B cell (primary cell): ENCODE measurements at regions of chr19 and their contacts with region 1.

Region 1: GRCh38 chr19:40305403-40305802 is 20.3 kb upstream of the AKT2 start:
- DNase-seq: peak; percentile 84
- ATAC-seq: peak; percentile 68
- H3K4me3 ChIP-seq: no peak overlapping the region
- H3K4me3 Mint-ChIP-seq: no peak overlapping the region
- H3K27ac ChIP-seq: no peak overlapping the region
- H3K27ac Mint-ChIP-seq: no peak overlapping the region
- H3K4me1 ChIP-seq: peaks cover 0 to 3% of the 10 kb centered on the region in 2 donors
- H3K4me1 Mint-ChIP-seq: peaks cover 2% of the 10 kb centered on the region
- H3K27me3 ChIP-seq: no peaks in the 10 kb centered on the region
- H3K27me3 Mint-ChIP-seq: no peaks in the 10 kb centered on the region
- CTCF ChIP-seq: peak; percentile 88

Region 2: DNA sequence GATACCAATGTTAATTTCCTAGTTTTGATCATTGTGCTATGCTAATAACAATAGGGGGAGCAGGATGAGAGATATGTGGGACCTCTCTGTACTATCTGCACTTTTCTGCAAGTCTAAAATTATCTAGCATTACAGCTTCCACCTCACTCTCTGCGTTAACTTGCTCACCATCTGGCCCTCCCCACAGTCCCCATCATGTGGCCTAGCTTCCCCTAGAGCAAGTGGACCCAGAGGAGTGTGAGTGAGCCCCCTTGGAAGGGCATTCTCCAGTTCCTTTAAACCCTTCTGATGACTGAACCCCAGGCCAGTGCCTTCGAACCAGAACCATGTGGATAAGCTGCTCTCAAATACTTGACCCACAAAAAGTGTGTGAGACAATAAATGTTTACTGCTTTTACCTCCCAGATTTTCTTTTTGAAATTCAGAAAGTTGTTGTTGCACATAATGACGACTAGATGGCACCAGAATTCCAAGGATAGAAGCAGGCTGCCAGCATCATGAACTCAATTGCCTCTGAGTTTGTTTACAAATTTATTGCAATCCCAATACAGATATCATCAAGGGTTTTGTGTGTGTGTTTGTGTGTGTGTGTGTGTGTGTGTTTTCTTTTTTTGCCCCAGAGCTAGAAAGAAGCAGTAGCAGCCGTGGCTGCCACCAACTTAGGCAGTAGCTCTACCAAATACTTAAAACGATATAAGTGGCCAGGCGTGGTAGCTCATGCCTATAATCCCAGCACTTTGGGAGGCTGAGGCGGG is 165.7 kb before region 1 on chr19:
- CTCF ChIA-PET with region 1: interaction called, 16 read pairs
- POLR2A ChIA-PET with region 1: no interaction called
- intact Hi-C with region 1: loop called (anchors 5 kb)
- DNase-seq: peak; percentile 73
- ATAC-seq: no peak
- H3K4me3 ChIP-seq: no peak overlapping the region
- H3K4me3 Mint-ChIP-seq: no peak overlapping the region
- H3K27ac ChIP-seq: no peak overlapping the region
- H3K27ac Mint-ChIP-seq: peak overlapping the region; percentile 46
- H3K4me1 ChIP-seq: peaks cover 23 to 26% of the 10 kb centered on the region in 2 donors
- H3K4me1 Mint-ChIP-seq: peaks cover 30% of the 10 kb centered on the region
- H3K27me3 ChIP-seq: no peaks in the 10 kb centered on the region
- H3K27me3 Mint-ChIP-seq: peaks cover 10% of the 10 kb centered on the region
- CTCF ChIP-seq: peak; percentile 81

Region 3: GRCh38 chr19:40178756-40179155 is 126.6 kb before region 1 on chr19:
- CTCF ChIA-PET with region 1: no interaction called
- POLR2A ChIA-PET with region 1: no interaction called
- intact Hi-C with region 1: no loop called
- DNase-seq: no peak
- ATAC-seq: no peak
- H3K4me3 ChIP-seq: no peak overlapping the region
- H3K4me3 Mint-ChIP-seq: no peak overlapping the region
- H3K27ac ChIP-seq: no peak overlapping the region
- H3K27ac Mint-ChIP-seq: no peak overlapping the region
- H3K4me1 ChIP-seq: no peaks in the 10 kb centered on the region
- H3K4me1 Mint-ChIP-seq: no peaks in the 10 kb centered on the region
- H3K27me3 ChIP-seq: peaks cover 0 to 5% (median 1%) of the 10 kb centered on the region in 4 experiments
- H3K27me3 Mint-ChIP-seq: peaks cover 31% of the 10 kb centered on the region
- CTCF ChIP-seq: no peak

Region 4: GRCh38 chr19:40285353-40286234 is 19.8 kb before region 1 on chr19:
- CTCF ChIA-PET with region 1: interaction called, 32 read pairs
- POLR2A ChIA-PET with region 1: interaction called, 3 read pairs
- intact Hi-C with region 1: no loop called
- DNase-seq: peak; percentile 100
- ATAC-seq: peak; percentile 74
- H3K4me3 ChIP-seq: peak overlapping the region in 4 of 5 experiments; percentile 68 to 89 (median 78)
- H3K4me3 Mint-ChIP-seq: peak overlapping the region; percentile 87
- H3K27ac ChIP-seq: peak overlapping the region; percentile 99 to 100
- H3K27ac Mint-ChIP-seq: peak overlapping the region; percentile 97
- H3K4me1 ChIP-seq: peaks cover 40 to 54% of the 10 kb centered on the region in 2 donors
- H3K4me1 Mint-ChIP-seq: peaks cover 53% of the 10 kb centered on the region
- H3K27me3 ChIP-seq: no peaks in the 10 kb centered on the region
- H3K27me3 Mint-ChIP-seq: no peaks in the 10 kb centered on the region
- CTCF ChIP-seq: no peak

Region 5: DNA sequence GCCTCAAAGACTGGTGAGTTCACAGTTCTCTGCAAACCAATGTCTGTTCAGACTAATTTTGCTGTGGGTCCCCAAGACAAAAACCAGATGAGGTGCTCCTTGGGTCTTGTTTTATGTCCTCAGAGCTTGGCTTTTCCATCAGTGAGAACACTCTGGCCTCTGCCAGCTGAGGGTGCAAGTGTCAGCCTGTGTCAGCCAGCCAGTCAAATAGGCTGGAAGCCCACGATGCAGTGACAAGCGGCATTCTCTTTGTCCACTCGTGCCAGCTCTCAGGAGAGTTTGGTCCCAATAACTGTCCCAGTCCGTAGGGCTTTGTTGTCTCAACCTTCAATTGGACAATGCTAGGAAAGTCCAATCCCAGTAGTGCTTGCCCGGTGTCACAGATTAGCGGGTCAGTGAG is 10.8 kb before region 1 on chr19:
- CTCF ChIA-PET with region 1: interaction called, 11 read pairs
- POLR2A ChIA-PET with region 1: no interaction called
- intact Hi-C with region 1: no loop called
- DNase-seq: no peak
- ATAC-seq: no peak
- H3K4me3 ChIP-seq: no peak overlapping the region
- H3K4me3 Mint-ChIP-seq: no peak overlapping the region
- H3K27ac ChIP-seq: no peak overlapping the region
- H3K27ac Mint-ChIP-seq: no peak overlapping the region
- H3K4me1 ChIP-seq: no peaks in the 10 kb centered on the region
- H3K4me1 Mint-ChIP-seq: no peaks in the 10 kb centered on the region
- H3K27me3 ChIP-seq: no peaks in the 10 kb centered on the region
- H3K27me3 Mint-ChIP-seq: no peaks in the 10 kb centered on the region
- CTCF ChIP-seq: no peak

Region 6: GRCh38 chr19:40388501-40388900 is 83.1 kb after region 1 on chr19:
- CTCF ChIA-PET with region 1: no interaction called
- POLR2A ChIA-PET with region 1: no interaction called
- intact Hi-C with region 1: no loop called
- DNase-seq: no peak
- ATAC-seq: no peak
- H3K4me3 ChIP-seq: no peak overlapping the region
- H3K4me3 Mint-ChIP-seq: no peak overlapping the region
- H3K27ac ChIP-seq: no peak overlapping the region
- H3K27ac Mint-ChIP-seq: no peak overlapping the region
- H3K4me1 ChIP-seq: no peaks in the 10 kb centered on the region
- H3K4me1 Mint-ChIP-seq: no peaks in the 10 kb centered on the region
- H3K27me3 ChIP-seq: peaks cover 0 to 3% (median 0%) of the 10 kb centered on the region in 4 experiments
- H3K27me3 Mint-ChIP-seq: no peaks in the 10 kb centered on the region
- CTCF ChIP-seq: no peak

Region 7: GRCh38 chr19:40521276-40521675 is 215.9 kb after region 1 on chr19:
- CTCF ChIA-PET with region 1: interaction called, 20 read pairs
- POLR2A ChIA-PET with region 1: no interaction called
- intact Hi-C with region 1: no loop called
- DNase-seq: peak; percentile 34
- ATAC-seq: no peak
- H3K4me3 ChIP-seq: no peak overlapping the region
- H3K4me3 Mint-ChIP-seq: no peak overlapping the region
- H3K27ac ChIP-seq: no peak overlapping the region
- H3K27ac Mint-ChIP-seq: no peak overlapping the region
- H3K4me1 ChIP-seq: no peaks in the 10 kb centered on the region
- H3K4me1 Mint-ChIP-seq: no peaks in the 10 kb centered on the region
- H3K27me3 ChIP-seq: peaks cover 0 to 15% (median 2%) of the 10 kb centered on the region in 4 experiments
- H3K27me3 Mint-ChIP-seq: peaks cover 31% of the 10 kb centered on the region
- CTCF ChIP-seq: peak; percentile 15